Activated CD4-positive, alpha-beta memory T cell treated with anti-CD3 and anti-CD28 coated beads for 36 hours (primary cell): ENCODE measurements at regions of chr1 and their contacts with region 1.

Region 1: GRCh38 chr1:159071970-159072582 is 4.5 kb downstream of the AIM2 start:
- DNase-seq: no peak
- H3K4me3 Mint-ChIP-seq: peak overlapping the region; percentile 95
- H3K27ac Mint-ChIP-seq: peak overlapping the region; percentile 82
- H3K4me1 Mint-ChIP-seq: peaks cover 65% of the 10 kb centered on the region
- H3K27me3 Mint-ChIP-seq: no peaks in the 10 kb centered on the region

Region 2: GRCh38 chr1:158203693-158204457 is 868.2 kb before region 1 on chr1:
- CTCF ChIA-PET with region 1: interaction called, 22 read pairs
- POLR2A ChIA-PET with region 1: no interaction called
- intact Hi-C with region 1: loop called (anchors 10 kb)
- DNase-seq: no peak
- H3K4me3 Mint-ChIP-seq: no peak overlapping the region
- H3K27ac Mint-ChIP-seq: no peak overlapping the region
- H3K4me1 Mint-ChIP-seq: peaks cover 7% of the 10 kb centered on the region
- H3K27me3 Mint-ChIP-seq: peaks cover 12% of the 10 kb centered on the region

Region 3: DNA sequence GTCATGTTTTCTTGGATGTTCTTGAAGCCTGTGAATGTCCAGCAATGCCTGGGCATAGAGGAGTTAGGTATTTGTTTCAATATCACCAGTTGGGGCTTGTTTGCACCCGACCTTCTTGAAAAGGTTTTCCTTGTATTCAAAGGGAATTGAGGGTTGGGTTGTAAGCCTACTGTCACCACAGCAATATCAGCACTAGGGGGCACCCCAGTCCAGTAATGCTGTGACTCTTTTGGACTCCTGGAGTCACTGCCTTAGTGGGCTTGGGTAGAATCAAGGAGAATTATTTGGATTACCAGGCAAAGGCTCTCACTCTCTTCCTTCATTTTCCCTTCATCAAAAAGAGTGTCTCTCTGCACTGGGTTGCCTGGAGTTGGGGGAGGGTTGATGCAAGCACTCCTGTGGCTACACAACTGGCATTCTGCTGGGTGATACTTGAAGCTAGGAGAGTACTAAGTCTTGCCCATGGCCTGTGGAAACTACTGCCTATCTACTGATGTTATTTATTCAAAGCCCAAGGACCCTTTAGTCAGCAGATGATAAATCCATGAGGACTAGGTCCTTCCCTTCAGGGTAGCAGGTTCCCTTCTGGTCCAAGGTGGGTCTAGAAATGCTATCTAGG is 565.6 kb before region 1 on chr1:
- CTCF ChIA-PET with region 1: interaction called, 9 read pairs
- POLR2A ChIA-PET with region 1: no interaction called
- intact Hi-C with region 1: loop called (anchors 10 kb)
- DNase-seq: peak; percentile 56
- H3K4me3 Mint-ChIP-seq: no peak overlapping the region
- H3K27ac Mint-ChIP-seq: no peak overlapping the region
- H3K4me1 Mint-ChIP-seq: no peaks in the 10 kb centered on the region
- H3K27me3 Mint-ChIP-seq: peaks cover 22% of the 10 kb centered on the region

Region 4: DNA sequence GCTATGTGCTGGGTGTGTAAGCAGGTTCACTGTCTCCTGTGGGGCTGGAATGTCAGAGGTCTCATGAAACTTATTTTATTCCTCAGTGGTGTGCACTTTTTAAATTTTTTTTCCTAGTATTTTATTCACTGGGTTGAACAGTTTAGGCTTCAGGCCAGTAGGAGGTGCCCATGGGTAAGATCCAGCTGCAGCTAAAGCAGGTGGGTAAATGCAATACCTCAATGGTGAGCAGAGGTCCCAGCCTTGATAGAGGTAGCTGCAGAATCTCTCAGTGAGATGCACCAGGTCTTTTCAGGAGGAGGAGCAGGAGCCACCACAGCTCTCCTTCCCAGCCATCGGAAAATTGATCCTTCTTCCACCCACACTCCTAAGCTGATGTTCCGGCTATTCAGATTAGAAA is 278.5 kb before region 1 on chr1:
- CTCF ChIA-PET with region 1: interaction called, 8 read pairs
- POLR2A ChIA-PET with region 1: no interaction called
- intact Hi-C with region 1: loop called (anchors 5 kb)
- DNase-seq: peak; percentile 56
- H3K4me3 Mint-ChIP-seq: no peak overlapping the region
- H3K27ac Mint-ChIP-seq: no peak overlapping the region
- H3K4me1 Mint-ChIP-seq: no peaks in the 10 kb centered on the region
- H3K27me3 Mint-ChIP-seq: peaks cover under 1% of the 10 kb centered on the region

Region 5: DNA sequence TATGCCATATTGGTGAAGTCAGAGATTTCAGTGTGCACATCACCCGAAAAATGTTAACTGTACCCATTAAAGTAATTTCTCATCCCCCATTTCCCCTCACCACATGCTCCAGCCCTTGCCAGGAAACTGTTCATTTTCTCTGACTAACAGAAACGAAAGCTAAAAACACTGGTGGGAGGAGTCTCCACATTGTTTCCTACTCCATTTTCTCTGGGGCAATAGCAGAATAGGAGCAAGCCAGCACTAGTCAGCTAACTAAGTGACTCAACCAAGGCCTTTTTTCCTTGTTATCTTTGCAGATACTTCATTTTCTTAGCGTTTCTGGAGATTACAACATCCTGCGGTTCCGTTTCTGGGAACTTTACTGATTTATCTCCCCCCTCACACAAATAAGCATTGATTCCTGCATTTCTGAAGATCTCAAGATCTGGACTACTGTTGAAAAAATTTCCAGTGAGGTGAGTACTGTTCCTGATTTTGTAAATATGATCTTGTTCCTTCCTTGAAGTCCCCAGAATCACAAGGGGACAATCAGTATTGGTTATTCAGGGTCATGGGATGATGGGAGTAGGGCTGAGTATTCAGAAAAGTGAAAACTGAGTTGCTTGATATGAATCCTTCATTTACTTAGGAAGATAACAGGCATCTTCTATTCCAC is 62.2 kb before region 1 on chr1 and contains the start of gene IFI16:
- CTCF ChIA-PET with region 1: interaction called, 16 read pairs
- POLR2A ChIA-PET with region 1: interaction called, 153 read pairs
- intact Hi-C with region 1: loop called (anchors 1 kb)
- DNase-seq: peak; percentile 77
- H3K4me3 Mint-ChIP-seq: peak within 1 kb of the TSS; percentile 90
- H3K27ac Mint-ChIP-seq: peak within 1 kb of the TSS; percentile 100
- H3K4me1 Mint-ChIP-seq: peaks cover 51% of the 10 kb centered on the region
- H3K27me3 Mint-ChIP-seq: no peaks in the 10 kb centered on the region
- total RNA-seq, gene IFI16: 215 to 220 TPM

Region 6: DNA sequence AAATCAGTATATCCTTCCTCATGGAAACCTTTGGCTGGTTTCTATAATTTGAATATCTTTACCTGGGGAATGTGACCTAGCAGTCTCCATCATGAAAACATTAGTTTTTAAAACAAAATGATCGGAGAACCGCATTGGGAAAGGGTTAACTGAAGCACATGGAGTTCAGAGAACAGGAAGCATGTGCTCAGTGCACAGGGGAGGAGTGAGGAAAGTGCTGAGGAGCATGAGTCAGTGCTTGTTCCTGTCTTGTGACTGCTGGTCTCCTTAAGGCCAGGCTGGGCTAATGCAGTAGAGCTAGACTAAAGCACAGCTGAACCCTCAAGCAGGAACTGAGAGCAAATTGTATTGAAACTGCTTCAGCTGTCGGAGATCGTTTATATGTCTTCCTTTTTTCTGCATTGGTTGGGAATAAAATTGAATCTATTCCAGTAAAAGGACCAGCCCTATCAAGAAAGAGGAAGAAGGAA is 56.6 kb before region 1 on chr1:
- CTCF ChIA-PET with region 1: interaction called, 16 read pairs
- POLR2A ChIA-PET with region 1: interaction called, 153 read pairs
- intact Hi-C with region 1: loop called (anchors 1 kb)
- DNase-seq: peak; percentile 85
- H3K4me3 Mint-ChIP-seq: peak overlapping the region; percentile 96
- H3K27ac Mint-ChIP-seq: peak overlapping the region; percentile 100
- H3K4me1 Mint-ChIP-seq: peaks cover 56% of the 10 kb centered on the region
- H3K27me3 Mint-ChIP-seq: no peaks in the 10 kb centered on the region

Region 7: DNA sequence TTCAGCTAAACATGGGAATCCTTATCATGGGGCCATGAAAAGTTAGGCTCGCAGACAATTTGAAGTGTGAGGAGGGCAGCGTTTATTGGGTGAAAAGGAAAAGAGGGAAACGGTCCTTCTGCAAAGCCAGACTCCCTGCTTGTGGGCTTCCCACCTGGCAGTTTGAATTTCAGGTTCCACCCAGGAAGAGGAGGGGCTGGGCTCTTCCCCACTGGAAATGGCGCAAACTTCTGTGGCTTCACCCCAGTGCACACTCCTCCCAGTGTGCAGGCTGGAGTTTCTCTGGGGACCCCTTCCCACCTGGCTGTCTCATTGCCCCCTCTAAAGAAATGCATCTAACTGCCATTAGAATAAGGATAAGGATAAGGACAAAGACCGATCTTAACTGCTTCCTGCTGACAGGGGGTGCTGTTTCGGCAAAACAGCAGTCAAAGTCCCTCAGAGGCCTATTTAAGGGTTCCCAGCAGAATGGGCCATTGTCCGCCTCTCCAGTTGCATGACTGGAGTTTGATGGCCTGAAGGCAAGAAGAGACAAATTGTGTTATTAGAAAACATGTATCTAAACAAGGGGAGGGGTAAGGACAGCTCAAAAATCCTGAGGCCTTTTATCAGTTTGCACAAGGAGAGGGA is 15.9 kb before region 1 on chr1:
- CTCF ChIA-PET with region 1: interaction called, 11 read pairs
- POLR2A ChIA-PET with region 1: interaction called, 9 read pairs
- intact Hi-C with region 1: loop called (anchors 1 kb)
- DNase-seq: no peak
- H3K4me3 Mint-ChIP-seq: no peak overlapping the region
- H3K27ac Mint-ChIP-seq: peak overlapping the region; percentile 70
- H3K4me1 Mint-ChIP-seq: peaks cover 59% of the 10 kb centered on the region
- H3K27me3 Mint-ChIP-seq: no peaks in the 10 kb centered on the region